Common myeloid progenitor, CD34-positive (primary cell): ENCODE measurements at regions of chr11 and their contacts with region 1.

Region 1: DNA sequence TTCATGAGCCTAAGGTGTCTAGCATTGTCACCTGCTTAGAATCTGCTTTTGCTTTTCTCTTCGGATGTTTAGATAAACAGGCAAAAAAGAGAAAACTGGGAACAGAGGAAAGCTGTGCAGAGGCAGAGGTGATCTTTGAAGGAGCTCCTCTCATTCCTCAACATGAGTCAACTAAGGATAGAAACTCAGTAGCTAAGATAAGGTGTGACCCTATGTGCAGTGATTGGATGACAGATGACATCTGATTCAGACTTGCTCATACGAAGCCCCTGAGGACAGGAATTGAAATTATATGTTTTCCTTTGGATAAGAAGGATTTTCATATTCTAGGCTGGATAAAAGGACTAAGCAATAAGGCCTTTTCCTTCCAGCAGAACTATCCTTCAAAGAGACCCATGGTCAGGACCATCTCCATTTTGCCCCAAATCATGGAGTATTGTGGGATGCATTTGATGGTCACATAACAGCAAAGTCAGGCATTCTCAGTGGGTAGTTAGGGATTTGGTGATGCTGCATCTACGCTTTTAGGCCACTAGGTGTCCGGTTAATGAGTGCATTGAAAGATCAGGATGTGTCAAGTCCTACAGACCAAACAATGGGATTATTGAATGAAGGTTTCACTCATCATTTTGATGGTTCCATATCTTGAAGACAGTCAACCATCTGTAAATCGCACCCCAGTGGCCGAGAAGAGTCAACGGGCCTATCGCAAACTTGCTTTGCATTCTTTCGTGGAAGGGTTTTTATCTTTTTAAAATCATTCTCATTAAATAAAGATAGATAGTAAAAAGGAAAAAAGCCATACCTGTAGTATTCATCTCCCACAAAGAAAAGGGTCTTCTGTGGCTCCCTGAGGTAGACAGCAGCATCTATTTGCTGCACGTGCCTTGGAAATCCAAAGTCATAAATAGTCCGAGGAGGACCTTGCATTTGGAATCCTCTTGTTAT is 32.2 kb downstream of the MMP20 start:
- DNase-seq: peak in 2 of 3 donors; percentile 17 to 22
- H3K4me3 ChIP-seq: no peak overlapping the region
- H3K27ac ChIP-seq: no peak overlapping the region
- H3K4me1 ChIP-seq: peaks cover 0 to 29% (median 0%) of the 10 kb centered on the region in 4 experiments
- H3K27me3 ChIP-seq: no peaks in the 10 kb centered on the region

Region 2: GRCh38 chr11:102430158-102430836 is 162.6 kb before region 1 on chr11:
- CTCF ChIA-PET with region 1: no interaction called
- POLR2A ChIA-PET with region 1: interaction called, 11 read pairs
- DNase-seq: peak in 2 of 3 donors; percentile 17 to 41
- H3K4me3 ChIP-seq: no peak overlapping the region
- H3K27ac ChIP-seq: peak overlapping the region in 1 of 2 experiments; percentile 27
- H3K4me1 ChIP-seq: peaks cover 0 to 5% (median 1%) of the 10 kb centered on the region in 4 experiments
- H3K27me3 ChIP-seq: no peaks in the 10 kb centered on the region